Posterior vena cava (tissue), 2 donors: ENCODE measurements at regions of chr1 and their contacts with region 1.

Region 1: DNA sequence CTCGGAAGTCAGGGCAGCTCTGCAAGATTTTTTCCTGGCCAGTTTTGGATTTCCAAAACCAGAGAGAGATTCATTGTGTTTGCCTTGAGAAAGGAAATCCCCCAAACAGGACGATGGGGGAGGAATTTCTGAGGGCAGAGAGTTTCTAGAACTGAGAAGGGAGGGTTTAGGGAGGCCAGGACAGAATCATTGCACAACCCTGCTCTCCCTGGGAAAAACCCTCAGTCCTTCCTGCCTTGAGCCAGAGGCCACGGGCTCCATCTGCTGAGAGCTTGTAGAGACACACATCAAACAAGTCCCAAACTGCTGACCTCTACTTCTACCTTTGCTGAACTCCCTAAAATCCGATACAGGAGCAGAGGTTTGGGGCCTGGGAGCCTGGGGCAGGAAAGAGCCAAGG is 99.7 kb downstream of the NMNAT2 start:
- DNase-seq: peak; percentile 92

Region 2: DNA sequence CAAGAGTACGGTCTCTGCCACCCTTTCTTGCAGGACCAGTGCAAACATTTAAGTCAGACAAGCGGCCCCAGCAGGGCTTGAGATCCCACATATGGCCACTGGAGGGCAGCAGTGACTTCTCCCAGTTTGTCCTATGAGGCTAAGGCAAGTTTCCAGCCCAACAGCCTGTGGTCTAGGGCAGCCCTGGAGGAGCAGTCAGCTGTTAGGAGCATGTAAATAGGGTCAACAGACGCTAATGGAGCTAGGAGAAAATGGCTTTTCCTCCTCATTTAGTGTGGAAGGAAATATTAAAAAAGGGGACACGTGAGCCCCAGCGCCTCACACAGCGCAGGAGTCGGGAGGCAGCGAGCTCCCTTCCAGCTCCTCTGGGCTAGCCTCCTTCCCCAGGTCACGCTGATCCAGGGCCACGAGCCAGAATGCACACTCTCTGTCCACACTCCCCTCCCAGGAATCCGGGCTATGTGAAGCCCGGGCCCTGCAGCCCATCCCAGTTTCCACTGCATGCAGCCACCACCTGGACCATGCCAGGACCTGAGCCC is 36.8 kb before region 1 on chr1:
- intact Hi-C with region 1: loop called (anchors 2 kb)
- DNase-seq: peak; percentile 96